SK-N-SH (cell line): ENCODE measurements at regions of chr7 and their contacts with region 1.

Region 1: DNA sequence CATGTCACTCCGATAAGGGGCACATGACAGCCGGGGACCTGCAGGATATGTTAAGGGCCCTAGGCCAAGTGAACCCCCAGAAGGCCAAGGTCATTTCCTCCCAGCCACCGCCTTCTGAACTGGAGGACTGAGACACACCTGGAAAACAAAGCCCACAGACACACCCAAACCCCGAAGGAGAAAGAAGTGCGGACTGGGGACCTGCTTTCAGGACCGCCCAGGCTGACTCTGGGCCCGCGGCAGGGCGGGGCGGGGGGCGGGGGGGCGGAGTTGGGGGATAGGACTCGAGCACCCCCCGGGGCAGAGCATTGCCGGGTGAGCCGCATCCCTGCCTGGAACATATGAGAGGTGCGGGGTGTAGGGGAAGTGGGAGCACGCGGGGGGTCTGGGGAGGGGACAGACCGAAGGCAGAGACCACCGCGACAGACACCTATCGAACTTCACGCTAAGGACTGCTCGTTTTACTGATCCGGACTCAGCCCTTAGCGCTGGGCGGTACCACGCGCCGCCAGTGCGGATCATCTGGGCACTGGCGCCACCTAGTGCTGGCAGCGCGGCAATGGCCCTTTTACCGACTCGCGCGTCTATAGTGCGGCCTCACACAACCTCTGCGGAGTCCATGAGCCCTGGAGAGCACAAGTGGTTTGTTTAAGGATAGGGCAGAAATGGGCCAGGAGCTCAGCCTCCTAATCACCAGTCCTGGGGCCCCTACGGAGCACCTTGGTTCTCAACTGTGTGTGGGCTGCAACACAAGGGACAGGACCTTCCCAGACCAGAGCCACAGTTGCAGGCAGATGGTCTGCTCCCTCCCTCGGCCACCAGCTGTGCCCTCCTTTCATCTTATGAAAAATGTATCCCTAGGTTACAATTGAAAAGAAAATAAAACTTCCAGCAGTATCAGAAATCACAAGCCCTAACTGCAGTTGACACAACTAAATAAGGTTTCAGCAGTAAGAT is 157.6 kb downstream of the HERPUD2 start:
- DNase-seq: peak; percentile 92
- H3K4me3 ChIP-seq: peak overlapping the region; percentile 37 to 65
- H3K27ac ChIP-seq: no peak overlapping the region
- H3K4me1 ChIP-seq: peaks cover 0 to 2% of the 10 kb centered on the region in 2 experiments; a peak in 1 of 4 replicates
- H3K27me3 ChIP-seq: peaks cover 13% of the 10 kb centered on the region
- CTCF ChIP-seq: peak; percentile 99
- EP300 ChIP-seq: no peak
- RAD21 ChIP-seq: peak; percentile 98

Region 2: GRCh38 chr7:35185907-35186731 is 351.2 kb before region 1 on chr7:
- CTCF ChIA-PET with region 1: interaction called, 12 read pairs
- POLR2A ChIA-PET with region 1: no interaction called
- DNase-seq: peak; percentile 73
- H3K4me3 ChIP-seq: peak overlapping the region; percentile 59 to 90
- H3K27ac ChIP-seq: peak overlapping the region; percentile 45 to 47
- H3K4me1 ChIP-seq: peaks cover 0 to 10% of the 10 kb centered on the region in 2 experiments; a peak in 1 of 4 replicates
- H3K27me3 ChIP-seq: no peaks in the 10 kb centered on the region
- CTCF ChIP-seq: 0 out of 2 replicates have a peak, but pooled peaks have one; percentile 57
- EP300 ChIP-seq: peak in 1 of 2 experiments; percentile 3; a peak in 1 of 4 replicates
- RAD21 ChIP-seq: peak; percentile 30; the same call in 1 of the 2 replicates

Region 3: GRCh38 chr7:35555934-35556333 is 18.6 kb after region 1 on chr7:
- CTCF ChIA-PET with region 1: interaction called, 25 read pairs
- POLR2A ChIA-PET with region 1: no interaction called
- DNase-seq: no peak
- H3K4me3 ChIP-seq: no peak overlapping the region
- H3K27ac ChIP-seq: no peak overlapping the region
- H3K4me1 ChIP-seq: peaks cover 0 to 12% of the 10 kb centered on the region in 2 experiments; a peak in 1 of 4 replicates
- H3K27me3 ChIP-seq: peaks cover 17% of the 10 kb centered on the region; the same call in 1 of the 2 replicates
- CTCF ChIP-seq: no peak
- EP300 ChIP-seq: no peak
- RAD21 ChIP-seq: no peak

Region 4: DNA sequence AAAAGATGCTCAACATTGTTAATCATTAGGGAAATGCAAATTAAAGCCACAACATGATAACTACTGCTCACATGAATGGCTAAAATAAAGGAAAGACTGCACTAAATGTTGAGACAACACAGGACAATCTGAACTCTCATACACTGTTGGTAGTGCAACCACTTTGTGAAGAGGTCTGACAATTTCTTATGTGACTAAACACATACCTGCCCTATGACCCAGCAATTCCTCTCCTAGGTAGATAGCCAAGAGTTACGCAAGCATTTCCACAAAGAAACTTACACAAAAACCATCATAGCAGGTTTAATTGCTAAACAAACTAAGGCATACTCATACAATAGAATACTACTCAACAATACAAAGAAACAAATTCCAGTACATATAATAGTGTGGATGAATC is 199.4 kb after region 1 on chr7:
- CTCF ChIA-PET with region 1: no interaction called
- POLR2A ChIA-PET with region 1: no interaction called
- DNase-seq: no peak
- H3K4me3 ChIP-seq: no peak overlapping the region
- H3K27ac ChIP-seq: no peak overlapping the region
- H3K4me1 ChIP-seq: peaks cover 0 to 13% of the 10 kb centered on the region in 2 experiments; a peak in 2 of 4 replicates
- H3K27me3 ChIP-seq: no peaks in the 10 kb centered on the region
- CTCF ChIP-seq: no peak
- EP300 ChIP-seq: no peak
- RAD21 ChIP-seq: no peak

Region 5: DNA sequence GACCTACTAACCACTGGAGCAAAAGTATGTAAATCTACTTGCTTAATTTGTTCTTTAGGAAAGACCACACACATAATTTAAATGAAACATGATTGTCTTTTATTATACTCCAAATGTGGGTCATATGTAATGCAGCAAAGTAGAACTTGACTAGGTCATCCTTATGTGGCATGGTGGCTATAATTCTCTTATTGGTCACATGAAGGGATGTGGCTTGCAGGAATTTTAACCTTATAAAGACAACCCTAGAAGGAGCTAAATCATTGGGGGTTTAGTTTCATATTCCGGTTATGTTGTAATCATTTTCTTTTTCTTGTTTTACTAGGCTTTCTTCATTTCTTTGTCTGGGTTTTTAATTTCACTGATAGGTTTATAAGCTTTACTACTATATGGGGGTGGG is 357.4 kb after region 1 on chr7:
- CTCF ChIA-PET with region 1: no interaction called
- POLR2A ChIA-PET with region 1: no interaction called
- DNase-seq: no peak
- H3K4me3 ChIP-seq: no peak overlapping the region
- H3K27ac ChIP-seq: no peak overlapping the region
- H3K4me1 ChIP-seq: no peaks in the 10 kb centered on the region; a peak in 1 of 4 replicates
- H3K27me3 ChIP-seq: no peaks in the 10 kb centered on the region
- CTCF ChIP-seq: no peak
- EP300 ChIP-seq: no peak
- RAD21 ChIP-seq: no peak

Region 6: GRCh38 chr7:36152756-36153570 is 615.6 kb after region 1 on chr7 and contains the start of gene EEPD1:
- CTCF ChIA-PET with region 1: no interaction called
- POLR2A ChIA-PET with region 1: no interaction called
- DNase-seq: peak; percentile 99
- H3K4me3 ChIP-seq: peak within 1 kb of the TSS; percentile 87 to 93
- H3K27ac ChIP-seq: peak within 1 kb of the TSS; percentile 56 to 83
- H3K4me1 ChIP-seq: peaks cover 0 to 45% of the 10 kb centered on the region in 2 experiments; a peak in 2 of 4 replicates
- H3K27me3 ChIP-seq: no peaks in the 10 kb centered on the region
- CTCF ChIP-seq: no peak
- EP300 ChIP-seq: peak in 1 of 2 experiments; percentile 52; a peak in 1 of 4 replicates
- RAD21 ChIP-seq: peak; percentile 14; the same call in 1 of the 2 replicates
- polyA plus RNA-seq, gene EEPD1: 2.4 and 5.0 TPM in 2 replicates